ENCODE measurements at regions of chr19 and their contacts with region 1.

Region 1: DNA sequence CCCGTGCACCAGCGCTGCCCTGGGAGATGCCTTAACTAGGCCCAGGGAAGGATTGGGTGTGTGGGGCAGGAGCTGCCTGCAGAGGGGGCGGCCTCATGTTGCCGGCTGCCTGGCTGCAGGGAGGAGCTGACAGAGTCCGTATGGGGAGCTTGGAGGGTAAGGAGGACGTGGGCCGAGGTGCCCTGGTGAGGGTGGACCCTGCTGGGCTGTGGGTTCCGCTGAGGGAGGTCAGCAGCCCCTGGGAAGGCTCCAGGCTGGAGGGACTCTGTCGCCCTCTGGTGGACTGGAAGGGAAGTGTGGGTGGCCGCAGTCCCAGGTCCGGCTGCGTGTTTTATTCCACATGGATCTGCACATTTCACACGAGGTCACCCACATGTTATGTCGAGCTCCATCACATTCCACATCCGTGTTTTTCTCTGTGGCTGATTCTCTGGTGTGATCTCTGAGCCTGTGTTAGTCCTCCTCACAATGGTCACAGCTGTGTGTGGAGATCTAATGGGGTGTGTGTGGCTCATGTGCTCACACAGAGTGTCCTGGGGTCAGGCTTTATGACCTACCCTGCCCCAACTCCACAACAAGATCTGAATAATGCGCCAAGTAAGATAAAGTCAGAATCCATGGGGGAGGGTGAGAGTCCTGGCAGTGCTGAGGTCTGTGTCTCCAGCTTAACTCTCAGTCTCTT is 1.8 kb upstream of the CEACAM8 start:
- DNase-seq: no peak
- ATAC-seq: no peak
- H3K4me3 ChIP-seq: no peak overlapping the region
- H3K27ac ChIP-seq: no peak overlapping the region
- H3K4me1 ChIP-seq: no peaks in the 10 kb centered on the region
- H3K27me3 ChIP-seq: no peaks in the 10 kb centered on the region
- CTCF ChIP-seq: peak; percentile 33 to 81 (median 72)
- POLR2A ChIP-seq: no peak

Region 2: DNA sequence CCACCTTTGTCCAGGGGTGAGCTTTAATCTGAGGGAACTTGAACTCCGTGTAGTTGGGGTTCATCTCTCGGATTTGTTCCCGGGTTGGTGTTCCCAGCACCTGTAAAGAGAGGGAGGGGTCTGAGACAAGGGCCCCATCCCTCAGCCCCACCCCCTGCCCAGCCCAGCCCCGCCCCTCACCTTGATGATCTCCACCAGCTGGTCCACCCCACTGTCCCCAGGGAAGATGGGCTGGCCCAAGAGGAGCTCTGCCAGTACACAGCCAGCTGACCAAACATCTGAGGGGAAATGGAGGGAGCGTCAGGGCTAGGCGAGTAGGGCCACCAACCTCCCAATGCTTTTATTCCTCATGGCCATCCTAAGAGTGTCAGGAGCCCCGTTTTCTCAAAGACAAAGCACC is 363.4 kb before region 1 on chr19:
- in situ Hi-C with region 1: no loop called
- intact Hi-C with region 1: no loop called
- DNase-seq: no peak
- ATAC-seq: no peak
- H3K4me3 ChIP-seq: no peak overlapping the region
- H3K27ac ChIP-seq: no peak overlapping the region
- H3K4me1 ChIP-seq: no peaks in the 10 kb centered on the region
- H3K27me3 ChIP-seq: no peaks in the 10 kb centered on the region
- CTCF ChIP-seq: no peak
- POLR2A ChIP-seq: no peak

Region 3: GRCh38 chr19:42563352-42564210 is 33.0 kb before region 1 on chr19:
- in situ Hi-C with region 1: no loop called
- intact Hi-C with region 1: loop called (anchors 1 kb)
- DNase-seq: no peak
- ATAC-seq: peak; percentile 65 to 80
- H3K4me3 ChIP-seq: no peak overlapping the region
- H3K27ac ChIP-seq: peak overlapping the region in 3 of 4 donors; percentile 40 to 66 (median 50)
- H3K4me1 ChIP-seq: peaks cover 9 to 22% of the 10 kb centered on the region in 2 donors
- H3K27me3 ChIP-seq: no peaks in the 10 kb centered on the region
- CTCF ChIP-seq: peak in 4 of 5 experiments; percentile 26 to 52 (median 36)
- POLR2A ChIP-seq: no peak